Heart left ventricle (tissue), 16 donors: ENCODE measurements at regions of chr4 and their contacts with region 1.

Region 1: DNA sequence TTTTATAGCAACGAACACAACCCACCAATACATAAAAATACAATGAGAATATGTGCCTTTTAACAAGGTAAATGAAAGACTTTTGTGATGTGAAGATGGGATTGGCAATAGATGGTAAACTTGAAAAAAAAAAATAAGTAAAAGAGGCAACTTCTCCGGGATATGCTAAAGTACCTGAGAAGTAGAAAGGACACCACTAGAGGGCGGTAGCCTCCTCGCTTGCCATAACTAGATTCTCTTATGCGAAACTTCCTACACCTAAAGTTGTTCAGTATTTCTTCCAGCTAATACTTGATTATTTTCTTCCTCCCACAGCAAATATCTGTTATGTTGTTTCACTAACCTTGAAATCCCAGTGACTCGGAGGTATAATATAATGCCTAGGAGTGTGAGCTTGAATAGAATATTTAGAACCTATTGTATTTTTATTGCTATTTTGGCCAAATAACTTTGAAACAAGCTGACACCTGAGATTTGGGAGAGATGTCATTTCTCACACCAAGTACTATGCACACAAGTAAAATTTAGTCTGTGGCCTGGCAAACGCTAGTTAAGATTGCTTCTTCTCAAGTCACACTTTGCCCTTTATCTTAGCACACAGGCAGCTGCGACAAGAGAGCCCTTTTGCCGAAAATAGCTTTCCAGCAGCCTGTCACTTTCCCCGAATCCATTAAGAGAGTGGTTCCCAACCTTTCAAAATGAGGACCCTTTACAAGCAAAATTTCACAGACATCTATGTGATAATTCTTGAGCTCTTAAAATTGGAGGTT is 44.9 kb upstream of the PDLIM5 start:
- DNase-seq: peak in 4 of 5 donors; percentile 68 to 79 (median 74)
- ATAC-seq: peak; percentile 31 to 48 (median 42)
- H3K4me3 ChIP-seq: peak overlapping the region in 4 of 12 donors; percentile 4 to 25 (median 16)
- H3K27ac ChIP-seq: peak overlapping the region; percentile 65 to 94 (median 83)
- H3K4me1 ChIP-seq: peaks cover 0 to 56% (median 15%) of the 10 kb centered on the region in 12 donors
- H3K27me3 ChIP-seq: no peaks in the 10 kb centered on the region
- CTCF ChIP-seq: peak; percentile 84 to 96 (median 90)
- POLR2A ChIP-seq: no peak

Region 2: DNA sequence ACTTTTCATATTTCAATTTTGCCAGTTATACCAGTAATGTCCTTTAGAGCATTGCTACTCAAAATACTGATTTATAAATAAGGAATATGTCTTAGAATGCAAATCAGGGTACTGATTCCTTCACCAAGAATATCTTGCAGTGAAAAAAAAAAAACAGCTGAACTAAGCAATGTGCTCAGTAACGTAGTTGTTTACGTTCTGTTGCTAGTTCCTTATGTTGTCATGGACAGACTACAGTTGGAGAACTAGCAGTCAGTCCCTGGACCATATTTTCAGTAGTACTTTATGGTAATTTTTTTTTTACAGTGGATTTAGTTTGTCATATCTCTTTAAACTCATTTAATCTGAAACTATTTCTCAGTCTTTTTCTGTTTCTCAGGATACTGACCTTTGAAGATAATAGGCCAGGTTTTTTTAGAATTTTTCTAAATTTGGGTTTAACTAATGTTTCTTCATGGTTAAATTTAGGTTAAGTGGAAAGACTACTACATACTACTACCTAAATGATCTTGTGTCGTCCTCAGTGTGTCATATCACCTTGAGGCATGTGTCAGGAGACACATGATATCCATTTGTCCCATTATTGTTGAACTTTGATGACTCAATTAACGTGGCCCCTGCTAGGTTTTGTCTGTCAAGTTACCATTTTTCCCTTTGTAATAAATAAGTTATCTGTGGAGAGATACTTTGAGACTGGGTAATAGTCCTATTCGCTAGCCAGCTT is 178.2 kb before region 1 on chr4:
- intact Hi-C with region 1: no loop called
- DNase-seq: no peak
- ATAC-seq: peak in 1 of 4 donors; percentile 75
- H3K4me3 ChIP-seq: no peak overlapping the region
- H3K27ac ChIP-seq: no peak overlapping the region
- H3K4me1 ChIP-seq: peaks cover 0 to 21% (median 0%) of the 10 kb centered on the region in 12 donors
- H3K27me3 ChIP-seq: no peaks in the 10 kb centered on the region
- CTCF ChIP-seq: no peak
- POLR2A ChIP-seq: no peak

Region 3: GRCh38 chr4:94463771-94464170 is 56.9 kb after region 1 on chr4:
- intact Hi-C with region 1: loop called in 1 of 10 experiments (anchors 5 kb)
- DNase-seq: no peak
- ATAC-seq: peak in 1 of 4 donors; percentile 18
- H3K4me3 ChIP-seq: peak overlapping the region in 3 of 12 donors; percentile 3 to 18 (median 7)
- H3K27ac ChIP-seq: peak overlapping the region in 8 of 12 donors; percentile 0 to 100 (median 98)
- H3K4me1 ChIP-seq: peaks cover 3 to 99% (median 52%) of the 10 kb centered on the region in 12 donors
- H3K27me3 ChIP-seq: no peaks in the 10 kb centered on the region
- CTCF ChIP-seq: no peak
- POLR2A ChIP-seq: no peak

Region 4: DNA sequence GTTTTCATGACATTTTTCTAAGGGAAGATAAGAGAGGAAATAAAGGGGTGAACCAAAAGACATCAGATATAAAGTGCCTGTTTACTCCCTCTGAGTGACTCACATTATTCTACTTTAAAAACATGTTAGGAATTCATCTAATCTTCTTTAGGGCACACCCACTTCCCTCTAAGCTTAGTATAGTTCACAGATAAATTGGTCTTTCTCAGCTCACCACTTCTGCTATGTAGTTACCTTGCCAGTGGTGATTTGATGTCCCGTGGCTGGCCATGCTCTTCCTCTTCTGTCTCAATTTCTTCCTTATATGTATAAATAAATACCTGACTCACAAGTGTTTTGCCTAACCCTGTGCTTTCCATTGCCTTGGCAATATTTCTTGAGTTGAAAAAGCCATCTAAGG is 141.7 kb after region 1 on chr4:
- intact Hi-C with region 1: loop called in 1 of 10 experiments (anchors 5 kb)
- DNase-seq: peak in 3 of 5 donors; percentile 30 to 48 (median 38)
- ATAC-seq: peak; percentile 72 to 89 (median 84)
- H3K4me3 ChIP-seq: no peak overlapping the region
- H3K27ac ChIP-seq: peak overlapping the region; percentile 65 to 93 (median 82)
- H3K4me1 ChIP-seq: peaks cover 6 to 80% (median 53%) of the 10 kb centered on the region in 12 donors
- H3K27me3 ChIP-seq: no peaks in the 10 kb centered on the region
- CTCF ChIP-seq: no peak
- POLR2A ChIP-seq: no peak

Region 5: DNA sequence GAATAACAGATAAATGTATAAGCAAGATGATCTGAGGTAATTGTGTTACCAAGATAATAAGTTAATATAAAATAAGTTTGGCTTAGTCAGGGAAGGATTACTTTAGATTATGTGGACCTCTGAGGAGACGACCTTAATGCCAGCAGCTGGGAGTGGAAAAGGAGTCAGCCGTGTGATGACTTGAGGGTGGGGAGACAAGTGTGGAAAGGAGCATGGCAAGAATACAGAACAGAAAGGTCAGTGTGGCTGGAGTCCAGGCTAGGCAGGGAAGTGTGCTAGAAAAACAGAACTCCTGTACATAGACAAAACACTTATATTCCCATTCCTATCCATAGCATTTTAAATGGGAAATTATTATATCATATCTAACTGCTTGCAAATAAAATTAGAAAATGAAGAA is 183.6 kb after region 1 on chr4:
- intact Hi-C with region 1: loop called in 6 of 10 experiments (anchors 2 to 5 kb)
- DNase-seq: peak in 1 of 5 donors; percentile 43
- ATAC-seq: peak; percentile 44 to 87 (median 62)
- H3K4me3 ChIP-seq: no peak overlapping the region
- H3K27ac ChIP-seq: peak overlapping the region in 3 of 12 donors; percentile 11 to 30 (median 15)
- H3K4me1 ChIP-seq: peaks cover 0 to 34% (median 16%) of the 10 kb centered on the region in 12 donors
- H3K27me3 ChIP-seq: no peaks in the 10 kb centered on the region
- CTCF ChIP-seq: no peak
- POLR2A ChIP-seq: no peak